Right ventricle myocardium inferior (tissue), 1 donor: ENCODE measurements at regions of chr9 and their contacts with region 1.

Region 1: GRCh38 chr9:73441890-73442818 is 290.5 kb downstream of the ANXA1 start:
- DNase-seq: no peak
- ATAC-seq: no peak

Region 2: GRCh38 chr9:73149371-73150067 is 292.6 kb before region 1 on chr9:
- intact Hi-C with region 1: no loop called
- DNase-seq: no peak
- ATAC-seq: no peak

Region 3: GRCh38 chr9:73497796-73498195 is 55.6 kb after region 1 on chr9:
- intact Hi-C with region 1: loop called (anchors 10 kb)
- DNase-seq: peak; percentile 40
- ATAC-seq: peak; percentile 74

Region 4: DNA sequence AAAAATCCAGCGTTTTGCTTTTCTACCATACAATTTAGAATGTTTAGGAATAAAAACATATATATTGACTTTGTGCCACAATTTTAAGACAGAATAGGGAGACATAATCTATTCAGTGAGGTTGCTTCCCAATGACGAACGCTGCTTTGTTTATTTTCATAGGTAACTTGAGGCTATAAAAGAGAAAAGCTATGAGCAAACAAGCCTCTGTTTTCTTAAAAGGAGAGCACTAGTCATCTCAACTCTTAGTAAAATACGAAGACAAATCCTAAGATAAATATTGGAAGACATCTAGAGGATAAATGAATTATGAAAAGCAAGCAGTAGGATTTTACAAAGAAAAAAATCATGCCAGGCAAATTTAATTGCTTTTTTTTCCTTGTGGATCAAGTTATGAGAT is 73.1 kb after region 1 on chr9:
- intact Hi-C with region 1: loop called (anchors 5 kb)
- DNase-seq: no peak
- ATAC-seq: no peak

Region 5: DNA sequence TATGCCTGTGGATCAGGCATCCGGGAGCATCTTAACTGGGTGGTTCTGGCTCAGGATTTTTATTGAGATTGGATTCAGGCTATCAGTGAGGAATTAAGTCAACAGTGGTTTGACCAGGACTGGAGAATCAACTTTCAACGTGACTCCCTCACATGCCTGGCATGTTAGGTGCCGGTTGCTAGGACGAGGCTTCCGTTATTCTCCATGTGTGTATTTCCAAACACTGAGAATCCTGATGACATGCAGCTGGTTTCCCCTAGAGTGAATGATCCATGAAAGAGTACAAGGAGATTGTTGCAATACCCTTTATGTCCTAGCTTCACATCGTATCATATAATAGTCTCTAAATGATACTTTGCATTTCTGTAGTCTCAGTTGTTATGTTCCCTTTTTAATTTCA is 238.7 kb after region 1 on chr9:
- intact Hi-C with region 1: no loop called
- DNase-seq: no peak
- ATAC-seq: no peak